ENCODE measurements at regions of chr16 and their contacts with region 1.

Region 1: GRCh38 chr16:49350265-49351095 is 23.1 kb upstream of the C16orf78 start:
- DNase-seq: peak; percentile 46 to 84 (median 79)
- ATAC-seq: peak in 1 of 2 donors; percentile 71
- H3K4me3 ChIP-seq: no peak overlapping the region
- H3K27ac ChIP-seq: no peak overlapping the region
- H3K4me1 ChIP-seq: no peaks in the 10 kb centered on the region
- H3K27me3 ChIP-seq: no peaks in the 10 kb centered on the region

Region 2: DNA sequence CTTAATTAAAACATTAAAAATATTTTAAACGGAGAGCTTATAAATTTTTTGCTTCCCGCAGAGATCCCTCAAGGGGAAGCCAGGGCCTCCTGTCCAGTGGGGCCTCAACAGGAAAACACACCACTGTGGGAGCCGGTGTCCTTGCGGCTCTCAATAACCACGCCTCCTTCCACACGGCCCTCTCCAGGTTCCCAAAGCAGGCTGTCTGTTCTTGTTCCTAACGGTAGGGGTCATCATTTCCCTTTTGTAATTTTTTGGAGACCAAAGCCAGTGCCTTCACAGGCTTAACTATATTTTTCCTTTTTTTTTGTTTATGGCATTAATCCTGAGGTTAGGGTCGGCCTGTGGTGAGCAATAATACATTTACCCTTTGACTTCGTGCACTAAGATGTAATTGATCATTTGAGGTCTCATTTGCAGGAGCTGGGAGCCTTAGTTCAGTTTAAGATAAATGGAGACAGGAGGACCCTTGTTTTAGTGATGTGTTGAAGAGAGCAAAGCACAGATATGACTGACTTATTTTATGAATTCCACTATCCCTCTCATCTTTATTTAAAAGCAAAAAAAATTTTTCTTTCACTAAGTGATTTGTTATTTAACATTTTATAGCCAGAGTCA is 663.0 kb before region 1 on chr16:
- intact Hi-C with region 1: loop called (anchors 2 to 5 kb)
- DNase-seq: peak; percentile 51 to 76 (median 55)
- ATAC-seq: peak; percentile 74 to 80
- H3K4me3 ChIP-seq: no peak overlapping the region
- H3K27ac ChIP-seq: no peak overlapping the region
- H3K4me1 ChIP-seq: no peaks in the 10 kb centered on the region
- H3K27me3 ChIP-seq: no peaks in the 10 kb centered on the region

Region 3: DNA sequence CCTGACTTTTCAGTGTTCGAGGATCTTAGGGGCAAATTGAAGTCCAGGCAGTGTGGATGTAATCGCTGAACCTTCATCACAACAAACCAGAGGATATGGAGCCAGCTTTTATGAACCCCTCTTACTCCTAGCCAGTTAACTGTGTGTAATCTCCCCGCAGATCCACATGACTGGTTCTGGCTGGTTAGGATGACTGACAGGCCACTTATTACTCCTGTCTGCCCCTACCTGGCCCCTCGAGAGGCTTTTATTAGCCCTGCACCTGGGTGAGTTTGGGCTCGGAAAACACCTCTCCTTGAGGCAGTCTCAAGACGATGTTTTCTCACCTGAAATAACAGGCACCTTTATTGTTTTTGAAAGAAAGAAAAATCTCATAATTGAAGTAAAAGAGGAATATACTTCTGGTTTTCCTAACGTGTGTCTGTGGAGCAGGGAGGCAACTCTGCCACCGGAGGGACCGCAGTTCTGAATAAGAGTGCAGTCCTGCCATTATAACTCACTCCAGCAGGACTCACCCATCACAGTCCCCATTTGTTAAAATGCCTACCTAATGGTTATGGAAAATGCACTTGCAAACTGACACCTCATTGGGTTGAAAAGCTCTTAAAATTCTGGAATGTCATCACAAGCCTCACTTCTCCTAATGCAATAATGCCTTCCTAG is 448.6 kb before region 1 on chr16:
- intact Hi-C with region 1: loop called in 1 of 4 experiments (anchors 5 kb)
- DNase-seq: no peak
- ATAC-seq: no peak
- H3K4me3 ChIP-seq: no peak overlapping the region
- H3K27ac ChIP-seq: no peak overlapping the region
- H3K4me1 ChIP-seq: no peaks in the 10 kb centered on the region
- H3K27me3 ChIP-seq: no peaks in the 10 kb centered on the region

Region 4: DNA sequence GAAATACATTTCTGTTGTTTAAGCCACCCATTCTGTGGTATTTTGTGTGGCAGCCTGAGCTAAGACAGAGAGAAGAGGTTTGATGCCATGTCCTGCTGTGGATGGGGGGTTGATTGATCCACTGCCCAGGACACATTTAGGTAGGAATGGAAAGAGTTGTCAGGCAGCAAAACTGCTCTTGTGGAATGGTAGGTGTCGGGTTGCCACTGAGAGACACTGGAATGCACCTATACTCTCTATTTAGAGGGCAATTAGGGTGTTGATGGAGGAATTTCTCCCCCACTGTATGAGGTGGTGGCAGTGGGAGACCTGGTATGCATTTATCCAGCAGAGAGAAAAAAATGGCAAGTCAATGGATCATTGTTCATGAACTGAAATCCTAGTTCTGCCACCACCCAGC is 99.8 kb before region 1 on chr16:
- intact Hi-C with region 1: no loop called
- DNase-seq: no peak
- ATAC-seq: no peak
- H3K4me3 ChIP-seq: no peak overlapping the region
- H3K27ac ChIP-seq: no peak overlapping the region
- H3K4me1 ChIP-seq: no peaks in the 10 kb centered on the region
- H3K27me3 ChIP-seq: no peaks in the 10 kb centered on the region